ENCODE measurements at regions of chr10 and their contacts with region 1.

Region 1: DNA sequence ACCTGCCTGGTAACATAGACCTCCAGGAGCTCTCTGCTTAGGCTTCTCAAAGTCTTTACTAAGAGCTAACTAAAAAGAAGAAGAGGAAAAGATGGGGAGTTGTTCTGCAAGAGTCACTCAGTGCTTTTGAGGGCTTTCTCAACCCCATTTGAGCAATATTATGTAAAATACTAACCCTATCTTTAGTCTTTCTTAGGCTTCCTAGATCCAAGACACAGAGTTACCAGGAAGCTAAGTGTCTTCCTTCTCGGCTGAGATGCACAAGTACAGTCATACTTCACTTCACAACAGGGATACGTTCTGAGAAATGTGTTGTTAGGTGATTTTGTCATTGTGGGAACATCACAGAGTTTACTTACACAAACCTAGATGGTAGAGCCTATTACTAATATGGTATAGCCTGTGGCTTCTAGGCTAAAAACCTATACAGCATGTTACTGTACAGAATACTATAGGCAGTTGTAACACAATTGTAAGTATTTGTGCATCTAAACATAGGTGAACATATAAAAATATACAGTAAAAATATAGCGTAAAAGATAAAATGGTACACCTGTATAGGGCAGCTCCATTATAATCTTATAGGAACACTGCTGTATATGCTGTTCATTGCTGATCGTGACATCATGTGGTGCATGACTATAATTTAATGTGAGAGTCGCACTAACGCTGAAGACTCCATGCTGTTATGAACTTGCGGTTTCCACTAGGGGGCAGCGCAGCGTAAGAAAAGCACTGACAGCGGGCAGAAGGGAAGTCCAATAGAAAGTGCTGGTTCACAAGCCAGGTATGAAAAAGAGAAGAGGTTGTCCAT is 16.3 kb downstream of the ANKRD22 start:
- DNase-seq: peak; percentile 95

Region 2: GRCh38 chr10:88866454-88866853 is 31.2 kb after region 1 on chr10:
- intact Hi-C with region 1: no loop called
- DNase-seq: no peak

Region 3: DNA sequence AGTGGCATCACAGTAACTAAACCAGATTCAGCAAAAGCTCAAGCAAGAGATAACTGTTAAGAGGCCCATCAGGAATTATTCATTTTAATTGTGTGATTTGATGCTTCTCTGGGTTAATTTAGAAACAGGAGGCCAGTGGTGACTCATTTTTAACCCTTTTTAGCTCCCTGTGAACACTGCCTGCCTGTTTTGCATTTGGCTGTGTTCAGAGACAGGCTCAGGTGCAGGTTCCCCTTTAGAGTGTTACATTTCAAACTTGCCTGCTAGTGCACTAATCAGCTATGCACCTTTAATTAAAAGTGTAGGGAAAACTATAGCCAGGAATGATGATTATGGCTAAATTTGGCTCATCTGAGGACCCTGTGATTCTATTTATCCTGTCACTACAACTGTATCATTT is 51.3 kb after region 1 on chr10:
- intact Hi-C with region 1: no loop called
- DNase-seq: no peak

Region 4: DNA sequence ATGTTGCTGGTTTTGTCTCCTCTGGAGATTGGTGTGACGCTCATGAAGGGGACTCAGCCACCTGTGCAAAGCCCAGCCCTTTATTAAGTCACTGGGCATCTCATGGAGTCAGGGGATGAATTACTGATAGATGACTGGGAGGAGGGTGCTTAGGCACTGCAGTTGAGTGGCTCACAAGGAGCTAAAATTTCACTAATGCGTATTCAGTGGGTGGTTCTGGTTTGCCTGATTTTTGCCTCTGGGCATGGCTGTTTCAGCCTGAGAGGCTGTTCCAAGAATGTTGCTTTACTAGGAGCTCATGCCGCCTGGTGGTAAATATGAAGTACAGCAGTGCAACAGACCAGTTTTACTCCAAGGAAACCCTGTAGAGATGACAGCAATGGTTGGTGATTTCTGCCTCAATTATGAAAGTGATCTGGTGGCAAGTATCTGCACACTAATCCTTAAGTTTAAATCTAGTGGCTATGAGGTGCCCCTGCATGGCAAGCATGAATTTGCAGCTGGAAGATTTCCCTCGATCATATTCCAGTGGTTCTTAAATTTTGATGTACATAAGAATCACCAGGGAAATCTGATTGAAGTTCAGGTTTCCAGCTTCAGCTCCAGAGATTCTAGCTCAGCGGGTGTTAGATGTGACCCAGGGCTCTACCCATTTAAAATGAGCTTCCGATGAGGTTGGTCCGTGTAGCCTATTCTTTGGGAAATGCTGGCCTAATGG is 97.4 kb after region 1 on chr10:
- intact Hi-C with region 1: loop called (anchors 2 to 5 kb)
- DNase-seq: no peak

Region 5: DNA sequence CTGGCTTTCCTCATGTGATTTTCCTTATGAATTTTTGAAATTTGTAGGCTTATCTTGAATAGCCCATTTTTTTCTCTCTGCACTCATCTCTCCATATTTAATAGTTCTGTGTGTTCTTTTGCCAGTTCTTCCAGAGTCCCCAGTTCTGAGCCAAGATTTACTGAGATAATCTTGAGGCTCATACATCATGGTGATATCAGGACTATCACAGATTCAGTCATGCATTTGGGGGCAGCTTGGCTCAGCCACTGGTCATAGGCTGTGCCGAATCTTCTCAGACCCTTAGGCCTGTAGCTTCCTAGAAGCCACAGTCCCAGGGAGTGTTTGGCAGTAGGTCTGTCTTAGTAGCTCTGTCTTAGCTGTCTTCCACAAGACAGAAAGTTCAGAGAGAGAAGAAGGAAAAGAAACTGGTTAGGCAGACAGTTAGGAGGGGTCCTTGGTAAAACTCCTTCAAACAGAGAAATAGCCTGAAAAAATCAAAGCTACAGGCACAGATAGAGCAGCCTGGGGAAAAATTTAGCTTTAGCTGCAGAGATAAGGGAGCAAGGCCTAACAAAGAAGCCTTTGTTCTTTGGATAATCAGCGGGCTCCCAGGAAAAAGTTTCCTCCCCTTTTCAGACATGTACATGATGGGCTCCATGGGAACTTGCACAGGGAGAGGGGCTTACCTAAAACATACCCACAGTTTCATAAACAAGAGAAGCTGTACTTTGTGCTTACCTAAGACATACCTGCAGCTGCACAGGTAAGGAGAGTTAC is 184.4 kb after region 1 on chr10:
- intact Hi-C with region 1: loop called in 1 of 2 experiments (anchors 10 kb)
- DNase-seq: no peak

Region 6: DNA sequence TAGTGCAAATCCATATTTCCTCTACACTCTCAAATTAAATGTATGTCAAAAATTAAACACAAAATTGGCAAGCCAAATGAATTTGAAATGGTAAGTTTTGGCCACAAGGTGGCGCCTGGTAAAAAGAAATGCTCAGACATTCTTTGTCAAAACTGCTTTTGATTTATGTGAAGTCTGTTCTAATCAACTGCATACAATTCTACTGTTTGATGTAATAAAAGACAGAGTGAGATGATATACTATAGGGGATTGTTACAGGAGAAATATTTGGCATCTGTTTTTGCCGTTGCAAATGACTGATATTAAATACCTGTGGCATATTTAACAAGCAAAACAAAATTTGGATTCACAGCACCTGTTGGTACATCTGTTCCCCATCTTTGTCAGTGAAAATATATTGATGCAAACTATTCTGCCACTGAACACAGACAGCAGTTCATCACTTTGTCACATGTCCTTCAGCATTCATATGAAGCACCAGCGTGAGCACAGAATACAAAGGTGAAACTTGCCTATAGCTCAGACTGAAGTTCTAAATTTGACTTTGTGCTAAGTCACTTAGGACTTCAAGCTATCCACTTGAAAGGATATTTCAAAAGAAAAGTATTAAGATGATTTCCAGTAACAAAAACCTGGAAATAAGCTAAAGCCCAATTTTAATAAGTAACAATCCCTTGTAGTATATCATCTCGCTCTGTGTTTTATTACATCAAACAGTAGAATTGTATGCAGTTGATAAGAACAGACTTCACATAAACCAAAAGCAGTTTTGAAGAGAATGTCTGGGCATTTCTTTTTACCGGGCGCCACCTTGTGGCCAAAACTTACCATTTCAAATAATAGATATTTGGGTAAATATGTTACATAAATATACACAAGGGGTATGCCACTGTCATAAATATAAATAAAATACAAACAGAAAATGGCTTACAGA is 382.0 kb after region 1 on chr10:
- intact Hi-C with region 1: loop called (anchors 5 to 10 kb)
- DNase-seq: no peak

Region 7: GRCh38 chr10:89224739-89225443 is 389.6 kb after region 1 on chr10:
- intact Hi-C with region 1: loop called in 1 of 2 experiments (anchors 10 kb)
- DNase-seq: no peak

Region 8: DNA sequence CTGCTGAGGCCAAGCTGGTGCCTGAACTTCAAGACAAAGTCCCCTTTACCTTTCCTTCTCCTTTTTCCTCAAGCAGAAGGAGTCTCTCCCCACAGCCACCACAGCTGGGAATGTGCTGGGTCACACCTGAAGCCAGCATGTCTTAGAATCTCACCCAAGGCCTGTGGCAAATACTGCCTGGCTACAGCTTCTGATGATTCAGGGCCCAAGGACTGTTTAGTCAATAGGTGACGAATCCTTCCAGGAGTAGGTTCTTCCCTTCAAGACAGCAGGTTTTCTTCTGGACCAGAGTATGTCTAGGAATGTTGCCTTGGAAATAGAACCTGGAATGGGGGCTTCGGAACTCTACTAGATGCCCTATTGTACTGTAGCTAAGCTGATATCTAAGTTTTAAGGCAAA is 1240.7 kb after region 1 on chr10:
- intact Hi-C with region 1: no loop called
- DNase-seq: no peak

Measured in posterior vena cava (tissue), 2 donors.